Natural killer cell (primary cell): ENCODE measurements at regions of chr14 and their contacts with region 1.

Region 1: DNA sequence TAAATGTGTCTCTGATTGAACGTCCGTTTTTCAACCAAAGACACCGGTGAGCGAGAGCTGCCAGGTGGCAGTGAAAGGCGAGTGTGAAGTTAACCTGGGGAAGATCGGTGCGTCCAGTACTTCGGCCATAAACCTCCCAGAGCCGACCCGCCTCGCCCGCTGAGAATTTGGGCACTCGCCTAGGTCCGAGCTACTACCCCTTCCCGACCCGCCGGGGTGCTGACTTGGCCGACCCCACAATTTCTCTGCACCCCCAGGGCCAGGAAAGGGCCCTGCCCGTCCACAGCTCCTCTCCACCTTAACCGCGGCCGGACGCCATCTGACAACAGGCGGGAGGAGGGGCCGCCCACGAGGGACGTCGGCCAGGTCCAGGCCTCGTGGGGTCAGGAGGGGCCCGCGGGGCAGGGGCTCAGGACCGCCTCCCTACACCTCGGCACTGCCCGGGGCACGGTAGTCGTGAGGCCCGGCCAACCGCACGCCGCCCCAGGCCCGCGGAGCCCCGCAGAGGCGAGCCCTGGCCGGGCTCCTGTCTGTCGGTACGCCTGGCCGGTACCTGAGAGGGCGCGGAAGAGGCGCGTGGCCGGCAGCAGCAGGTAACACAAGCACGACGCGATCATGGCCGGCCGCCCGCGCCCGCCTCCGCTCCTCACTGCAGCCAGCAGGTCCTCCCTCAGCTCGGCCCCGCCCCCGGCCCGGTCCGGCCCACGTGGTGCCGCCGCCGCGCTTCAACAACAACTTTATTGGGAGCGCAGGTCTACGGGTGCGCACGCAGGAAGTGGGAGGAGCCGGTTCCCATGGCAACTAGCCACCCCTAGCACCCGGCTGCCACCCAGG is at the start of gene ANGEL1:
- DNase-seq: peak; percentile 98 to 99
- ATAC-seq: peak; percentile 92 to 98 (median 94)
- H3K4me3 ChIP-seq: peak within 1 kb of the TSS; percentile 65
- H3K4me3 Mint-ChIP-seq: peak within 1 kb of the TSS; percentile 90
- H3K27ac ChIP-seq: peak within 1 kb of the TSS; percentile 86
- H3K27ac Mint-ChIP-seq: peak within 1 kb of the TSS; percentile 88 to 95
- H3K4me1 ChIP-seq: peaks cover 21% of the 10 kb centered on the region
- H3K4me1 Mint-ChIP-seq: peaks cover 25 to 30% of the 10 kb centered on the region in 2 donors
- H3K27me3 ChIP-seq: no peaks in the 10 kb centered on the region
- H3K27me3 Mint-ChIP-seq: no peaks in the 10 kb centered on the region
- CTCF ChIP-seq: no peak
- total RNA-seq, gene ANGEL1: 12.2 to 20.2 (median 17.2) TPM

Region 2: DNA sequence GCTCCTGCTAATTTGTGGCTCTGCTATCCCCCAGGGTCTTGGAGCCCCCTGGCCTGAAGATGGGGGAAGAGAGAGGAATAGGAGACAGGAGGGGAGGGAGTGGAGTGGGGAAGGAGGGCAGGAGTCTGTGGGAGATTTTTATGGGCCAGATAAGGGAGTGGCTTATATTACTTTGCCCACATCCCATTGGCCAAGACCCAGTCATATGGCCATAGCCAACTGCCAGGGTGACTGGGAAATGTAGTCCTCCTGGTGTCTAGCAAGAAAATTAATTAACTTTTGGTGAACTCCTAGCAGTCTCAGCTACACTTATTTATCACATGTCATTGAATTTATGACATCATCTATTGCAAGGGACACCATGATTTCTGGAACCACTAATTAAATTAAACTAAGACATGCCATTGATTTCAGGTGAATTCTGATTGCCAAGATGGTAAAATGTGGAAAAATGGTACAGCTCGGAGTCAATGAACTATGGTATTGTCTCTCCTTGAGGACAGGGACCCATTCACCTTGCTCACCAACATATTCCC is 386.2 kb before region 1 on chr14:
- intact Hi-C with region 1: no loop called
- DNase-seq: no peak
- ATAC-seq: no peak
- H3K4me3 ChIP-seq: no peak overlapping the region
- H3K4me3 Mint-ChIP-seq: no peak overlapping the region
- H3K27ac ChIP-seq: no peak overlapping the region
- H3K27ac Mint-ChIP-seq: no peak overlapping the region
- H3K4me1 ChIP-seq: no peaks in the 10 kb centered on the region
- H3K4me1 Mint-ChIP-seq: no peaks in the 10 kb centered on the region
- H3K27me3 ChIP-seq: no peaks in the 10 kb centered on the region
- H3K27me3 Mint-ChIP-seq: peaks cover 0 to 5% of the 10 kb centered on the region in 2 donors
- CTCF ChIP-seq: no peak

Region 3: DNA sequence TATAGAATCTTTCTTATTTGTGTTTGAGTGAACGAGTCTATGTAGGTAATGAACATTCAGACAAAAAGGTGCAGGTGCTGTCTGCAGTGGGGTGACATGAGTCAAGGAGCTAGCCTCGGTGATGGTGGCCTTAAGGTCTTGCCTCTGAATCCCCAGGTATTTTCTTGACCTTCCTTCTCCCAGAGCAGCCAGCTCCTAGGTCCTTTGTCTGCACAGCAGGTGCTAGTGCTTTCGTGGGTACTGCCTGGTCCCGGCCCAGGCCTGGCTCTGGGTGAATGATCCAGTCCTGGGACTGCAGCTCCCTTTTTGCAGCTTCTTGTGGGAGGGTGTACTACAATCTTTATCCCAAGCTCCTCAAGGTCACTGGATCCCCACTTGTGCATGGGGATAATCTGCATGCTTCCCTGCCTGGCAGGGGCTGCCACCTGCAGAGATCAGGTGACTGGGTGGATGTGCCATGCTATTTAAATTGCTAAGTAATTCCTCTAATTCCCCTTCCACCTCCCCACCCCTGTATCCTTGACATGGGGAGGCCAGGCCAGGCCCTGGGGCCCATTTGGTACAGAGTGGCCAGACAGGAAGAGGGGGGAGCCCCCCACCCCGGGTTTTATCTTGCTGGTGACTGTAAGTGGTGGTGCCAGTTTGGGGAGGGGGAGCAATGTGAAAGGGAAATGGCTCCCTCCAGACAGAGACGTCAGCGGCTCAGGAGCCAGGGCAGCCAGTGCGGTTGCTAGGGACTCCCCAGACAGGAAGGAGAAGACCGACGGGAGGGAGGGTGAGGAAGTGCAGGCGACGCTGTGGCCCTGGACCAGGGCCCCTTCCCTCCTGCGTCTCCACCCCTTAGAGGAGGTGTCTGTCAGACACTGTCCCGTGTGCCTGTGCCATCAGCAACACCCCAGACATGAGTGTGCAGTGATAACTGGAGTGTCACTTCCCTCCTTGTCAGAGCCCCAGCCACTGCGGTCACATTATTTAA is 44.5 kb before region 1 on chr14:
- intact Hi-C with region 1: loop called (anchors 2 kb)
- DNase-seq: peak; percentile 59 to 87
- ATAC-seq: peak; percentile 94 to 97 (median 94)
- H3K4me3 ChIP-seq: no peak overlapping the region
- H3K4me3 Mint-ChIP-seq: no peak overlapping the region
- H3K27ac ChIP-seq: peak overlapping the region; percentile 76
- H3K27ac Mint-ChIP-seq: peak overlapping the region; percentile 81 to 87
- H3K4me1 ChIP-seq: peaks cover 29% of the 10 kb centered on the region
- H3K4me1 Mint-ChIP-seq: peaks cover 0 to 24% of the 10 kb centered on the region in 2 donors
- H3K27me3 ChIP-seq: no peaks in the 10 kb centered on the region
- H3K27me3 Mint-ChIP-seq: no peaks in the 10 kb centered on the region
- CTCF ChIP-seq: no peak